GM10248 (cell line): ENCODE measurements at regions of chr5 and their contacts with region 1.

Region 1: DNA sequence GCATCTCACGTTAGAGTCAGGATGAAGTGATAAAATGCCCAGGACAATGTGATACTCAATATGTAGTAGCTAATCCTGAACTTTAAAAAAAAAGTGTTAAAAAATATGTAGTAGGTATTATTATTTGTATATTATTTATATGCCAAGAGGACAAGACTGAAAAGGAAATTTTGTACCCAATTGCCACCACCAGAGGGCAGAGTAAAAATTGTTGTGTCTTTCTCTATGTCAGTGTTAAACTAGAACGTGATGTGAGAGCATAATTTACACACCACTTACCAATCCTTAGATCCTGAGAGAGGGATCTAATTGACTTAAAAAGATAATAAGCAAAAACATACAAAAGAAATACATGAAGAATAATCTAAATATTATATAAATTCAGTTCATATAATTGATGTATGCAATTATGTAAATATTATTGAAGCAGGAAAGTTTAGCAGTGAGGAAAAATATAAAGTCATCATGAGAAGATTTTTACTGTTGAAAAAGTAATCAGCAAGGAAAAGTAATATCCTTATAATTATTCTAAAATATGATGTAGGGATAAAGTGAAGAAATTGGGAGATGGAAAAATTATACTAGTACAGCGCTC is 288.9 kb downstream of the RAB3C start:
- DNase-seq: no peak
- CTCF ChIP-seq: peak; percentile 54

Region 2: GRCh38 chr5:58855851-58856739 is 15.7 kb before region 1 on chr5:
- CTCF ChIA-PET with region 1: interaction called, 12 read pairs
- POLR2A ChIA-PET with region 1: no interaction called
- DNase-seq: no peak
- CTCF ChIP-seq: no peak

Region 3: DNA sequence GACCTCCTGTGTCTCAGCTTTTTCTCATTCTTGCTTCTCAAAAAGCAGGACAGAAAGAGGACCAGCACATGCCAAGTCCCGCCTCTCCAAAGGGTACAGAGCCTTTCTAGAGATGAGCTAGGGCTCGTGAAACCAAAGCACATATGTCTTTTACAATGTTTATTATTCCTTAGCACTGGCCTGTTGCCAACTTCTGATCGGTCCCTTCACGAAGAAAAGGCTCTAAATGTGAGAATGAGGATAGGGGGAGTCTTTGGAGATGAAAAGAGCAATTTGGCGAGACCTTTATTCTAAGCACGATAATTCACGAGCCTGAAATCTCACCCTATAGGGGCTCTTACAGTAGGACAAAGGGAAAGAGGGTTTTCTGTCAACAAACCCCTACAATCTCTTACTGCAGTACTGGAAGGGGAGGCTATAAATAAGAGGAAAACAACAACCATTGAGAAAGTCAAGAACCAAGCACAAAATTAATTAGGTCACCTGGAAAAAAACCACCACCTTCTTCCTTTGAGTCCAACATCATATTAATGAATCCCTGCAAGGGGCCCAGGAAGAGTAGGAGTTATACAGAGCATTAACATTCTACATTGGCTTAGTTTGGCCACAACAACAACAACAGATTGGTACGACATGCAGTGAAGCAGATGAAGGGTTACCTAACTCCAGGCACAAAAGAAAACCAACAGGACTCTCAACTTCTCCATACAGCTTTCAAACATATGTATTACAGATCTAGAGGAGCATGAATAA is 712.2 kb after region 1 on chr5:
- CTCF ChIA-PET with region 1: no interaction called
- POLR2A ChIA-PET with region 1: no interaction called
- DNase-seq: no peak
- CTCF ChIP-seq: no peak